CD4-positive, alpha-beta T cell (primary cell): ENCODE measurements at regions of chr7 and their contacts with region 1.

Region 1: DNA sequence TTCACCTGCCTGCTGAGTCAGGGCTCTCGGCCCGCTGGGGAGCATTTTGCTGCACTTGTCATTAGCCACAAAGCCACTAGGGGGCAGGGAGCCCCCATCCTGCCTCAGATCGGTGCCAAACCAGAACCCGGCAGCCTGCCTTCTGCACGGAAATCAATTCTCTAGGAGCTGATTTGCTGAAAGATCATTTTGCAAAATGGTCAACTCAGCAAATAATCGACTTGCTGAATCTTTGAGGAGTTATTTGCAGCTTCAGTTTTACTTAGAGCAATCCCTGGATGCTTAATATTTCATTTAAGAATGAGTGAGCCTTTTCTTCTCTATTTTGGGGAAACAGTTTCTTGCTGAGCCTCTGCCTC is 1.7 kb upstream of the GIMAP8 start:
- DNase-seq: peak; percentile 83 to 94 (median 88)
- ATAC-seq: peak; percentile 58
- H3K4me3 ChIP-seq: peak overlapping the region; percentile 96
- H3K4me3 Mint-ChIP-seq: peak overlapping the region; percentile 98
- H3K27ac ChIP-seq: peak overlapping the region; percentile 82 to 92
- H3K27ac Mint-ChIP-seq: peak overlapping the region; percentile 78
- H3K4me1 ChIP-seq: peaks cover 69% of the 10 kb centered on the region
- H3K4me1 Mint-ChIP-seq: peaks cover 54% of the 10 kb centered on the region
- H3K27me3 ChIP-seq: no peaks in the 10 kb centered on the region
- H3K27me3 Mint-ChIP-seq: no peaks in the 10 kb centered on the region
- CTCF ChIP-seq: peak; percentile 93

Region 2: DNA sequence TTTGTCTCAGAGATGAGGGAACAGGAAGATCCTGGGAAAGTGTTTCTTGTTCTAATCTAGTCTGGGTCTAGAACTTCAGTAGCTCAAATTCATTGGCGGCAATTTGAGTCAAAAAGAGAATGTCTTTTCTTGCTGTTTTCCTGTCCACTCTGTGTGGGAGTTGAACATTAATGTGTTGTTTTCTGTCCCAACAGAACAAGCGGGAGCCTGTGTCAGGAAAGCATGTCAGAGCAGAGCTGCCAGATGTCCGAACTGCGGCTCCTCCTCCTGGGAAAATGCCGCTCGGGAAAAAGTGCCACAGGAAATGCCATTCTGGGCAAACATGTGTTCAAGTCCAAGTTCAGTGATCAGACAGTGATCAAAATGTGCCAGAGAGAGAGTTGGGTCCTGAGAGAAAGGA is 17.7 kb after region 1 on chr7:
- CTCF ChIA-PET with region 1: interaction called, 4 read pairs
- POLR2A ChIA-PET with region 1: interaction called, 20 read pairs
- intact Hi-C with region 1: no loop called
- DNase-seq: no peak
- ATAC-seq: no peak
- H3K4me3 ChIP-seq: no peak overlapping the region
- H3K4me3 Mint-ChIP-seq: peak overlapping the region; percentile 17
- H3K27ac ChIP-seq: no peak overlapping the region
- H3K27ac Mint-ChIP-seq: peak overlapping the region; percentile 81
- H3K4me1 ChIP-seq: peaks cover 52% of the 10 kb centered on the region
- H3K4me1 Mint-ChIP-seq: peaks cover 97% of the 10 kb centered on the region
- H3K27me3 ChIP-seq: no peaks in the 10 kb centered on the region
- H3K27me3 Mint-ChIP-seq: no peaks in the 10 kb centered on the region
- CTCF ChIP-seq: no peak

Region 3: GRCh38 chr7:150502519-150502918 is 53.8 kb after region 1 on chr7:
- CTCF ChIA-PET with region 1: interaction called, 10 read pairs
- POLR2A ChIA-PET with region 1: interaction called, 60 read pairs
- intact Hi-C with region 1: no loop called
- DNase-seq: peak in 6 of 14 experiments; percentile 38 to 85 (median 64)
- ATAC-seq: peak; percentile 83
- H3K4me3 ChIP-seq: no peak overlapping the region
- H3K4me3 Mint-ChIP-seq: peak overlapping the region; percentile 50
- H3K27ac ChIP-seq: peak overlapping the region; percentile 66 to 69
- H3K27ac Mint-ChIP-seq: peak overlapping the region; percentile 88
- H3K4me1 ChIP-seq: peaks cover 44% of the 10 kb centered on the region
- H3K4me1 Mint-ChIP-seq: peaks cover 89% of the 10 kb centered on the region
- H3K27me3 ChIP-seq: no peaks in the 10 kb centered on the region
- H3K27me3 Mint-ChIP-seq: no peaks in the 10 kb centered on the region
- CTCF ChIP-seq: no peak

Region 4: GRCh38 chr7:150520145-150520544 is 71.4 kb after region 1 on chr7:
- CTCF ChIA-PET with region 1: interaction called, 51 read pairs
- POLR2A ChIA-PET with region 1: interaction called, 499 read pairs
- intact Hi-C with region 1: loop called in 1 of 2 experiments (anchors 1 kb)
- DNase-seq: peak in 9 of 14 experiments; percentile 23 to 59 (median 47)
- ATAC-seq: peak; percentile 33
- H3K4me3 ChIP-seq: peak overlapping the region; percentile 79
- H3K4me3 Mint-ChIP-seq: peak overlapping the region; percentile 100
- H3K27ac ChIP-seq: peak overlapping the region; percentile 59 to 60
- H3K27ac Mint-ChIP-seq: peak overlapping the region; percentile 93
- H3K4me1 ChIP-seq: peaks cover 12% of the 10 kb centered on the region
- H3K4me1 Mint-ChIP-seq: peaks cover 36% of the 10 kb centered on the region
- H3K27me3 ChIP-seq: no peaks in the 10 kb centered on the region
- H3K27me3 Mint-ChIP-seq: no peaks in the 10 kb centered on the region
- CTCF ChIP-seq: no peak

Region 5: DNA sequence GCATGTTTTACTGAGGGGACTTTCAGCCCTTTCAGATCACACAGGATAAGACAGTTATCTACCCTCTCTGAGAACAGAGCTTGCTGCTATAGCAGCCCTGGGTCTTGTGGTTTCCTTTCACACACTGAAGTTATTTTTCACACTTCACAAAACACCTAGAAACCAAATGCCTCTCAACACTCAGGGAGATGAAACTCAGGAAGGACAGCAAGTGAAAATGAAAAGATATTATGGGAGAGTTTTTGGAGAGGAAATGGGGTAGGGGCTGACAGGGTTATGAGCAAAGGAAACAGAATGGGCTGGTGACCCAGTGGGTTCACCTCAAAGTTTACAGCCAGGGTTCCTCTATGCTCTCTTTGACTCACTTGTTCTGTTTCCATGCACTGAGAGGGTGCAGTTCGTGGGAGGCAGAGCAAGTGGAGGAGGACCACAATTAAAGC is 219.7 kb after region 1 on chr7:
- CTCF ChIA-PET with region 1: interaction called, 5 read pairs
- POLR2A ChIA-PET with region 1: interaction called, 14 read pairs
- intact Hi-C with region 1: no loop called
- DNase-seq: peak in 13 of 14 experiments; percentile 34 to 92 (median 51)
- ATAC-seq: peak; percentile 82
- H3K4me3 ChIP-seq: peak overlapping the region; percentile 4
- H3K4me3 Mint-ChIP-seq: peak overlapping the region; percentile 49
- H3K27ac ChIP-seq: peak overlapping the region; percentile 73 to 85
- H3K27ac Mint-ChIP-seq: peak overlapping the region; percentile 91
- H3K4me1 ChIP-seq: peaks cover 70% of the 10 kb centered on the region
- H3K4me1 Mint-ChIP-seq: peaks cover 94% of the 10 kb centered on the region
- H3K27me3 ChIP-seq: no peaks in the 10 kb centered on the region
- H3K27me3 Mint-ChIP-seq: no peaks in the 10 kb centered on the region
- CTCF ChIP-seq: no peak

Region 6: DNA sequence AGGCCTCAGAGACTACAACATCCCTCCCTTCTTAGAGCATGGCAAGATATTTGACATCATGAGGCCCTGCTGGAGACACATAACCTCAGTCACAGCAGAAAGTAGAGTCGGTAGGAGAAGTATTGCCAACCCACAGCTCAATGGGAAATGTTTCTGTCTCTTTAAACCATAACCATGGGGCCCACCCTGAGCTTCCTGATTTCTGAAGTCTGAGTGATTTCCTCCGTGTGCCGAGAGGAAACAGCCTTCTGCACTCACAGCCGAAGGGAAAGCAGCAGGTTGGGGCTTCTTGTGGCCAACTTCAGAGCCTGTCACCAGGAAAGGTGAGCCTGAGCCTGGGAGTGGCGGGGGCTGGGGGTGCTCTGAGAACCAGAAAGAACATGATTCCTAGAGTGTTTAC is 267.6 kb after region 1 on chr7 and contains the start of gene GIMAP1:
- CTCF ChIA-PET with region 1: interaction called, 29 read pairs
- POLR2A ChIA-PET with region 1: interaction called, 43 read pairs
- intact Hi-C with region 1: no loop called
- DNase-seq: peak; percentile 35 to 85 (median 72)
- ATAC-seq: peak; percentile 88
- H3K4me3 ChIP-seq: peak within 1 kb of the TSS; percentile 79
- H3K4me3 Mint-ChIP-seq: peak within 1 kb of the TSS; percentile 100
- H3K27ac ChIP-seq: peak within 1 kb of the TSS; percentile 81 to 83
- H3K27ac Mint-ChIP-seq: peak within 1 kb of the TSS; percentile 87
- H3K4me1 ChIP-seq: peaks cover 51% of the 10 kb centered on the region
- H3K4me1 Mint-ChIP-seq: peaks cover 78% of the 10 kb centered on the region
- H3K27me3 ChIP-seq: no peaks in the 10 kb centered on the region
- H3K27me3 Mint-ChIP-seq: no peaks in the 10 kb centered on the region
- CTCF ChIP-seq: no peak
- total RNA-seq, gene GIMAP1: 8.0 to 8.1 TPM

Region 7: GRCh38 chr7:150753826-150754603 is 305.2 kb after region 1 on chr7:
- CTCF ChIA-PET with region 1: interaction called, 48 read pairs
- POLR2A ChIA-PET with region 1: interaction called, 89 read pairs
- intact Hi-C with region 1: loop called (anchors 1 kb)
- DNase-seq: peak in 3 of 14 experiments; percentile 58 to 71 (median 68)
- ATAC-seq: peak; percentile 10
- H3K4me3 ChIP-seq: no peak overlapping the region
- H3K4me3 Mint-ChIP-seq: peak overlapping the region; percentile 57
- H3K27ac ChIP-seq: peak overlapping the region; percentile 66 to 72
- H3K27ac Mint-ChIP-seq: peak overlapping the region; percentile 99
- H3K4me1 ChIP-seq: peaks cover 66% of the 10 kb centered on the region
- H3K4me1 Mint-ChIP-seq: peaks cover 80% of the 10 kb centered on the region
- H3K27me3 ChIP-seq: no peaks in the 10 kb centered on the region
- H3K27me3 Mint-ChIP-seq: peaks cover 5% of the 10 kb centered on the region
- CTCF ChIP-seq: peak; percentile 38